ENCODE measurements at regions of chr15 and their contacts with region 1.

Region 1: GRCh38 chr15:31435261-31435911 is 108.8 kb downstream of the KLF13 start:
- DNase-seq: peak; percentile 84
- H3K4me3 ChIP-seq: no peak overlapping the region
- H3K27ac ChIP-seq: peak overlapping the region; percentile 28 to 79 (median 64)
- H3K4me1 ChIP-seq: peaks cover 9 to 26% of the 10 kb centered on the region in 2 donors
- H3K27me3 ChIP-seq: no peaks in the 10 kb centered on the region
- CTCF ChIP-seq: peak in 5 of 6 experiments; percentile 25 to 89 (median 80)
- POLR2A ChIP-seq: no peak

Region 2: GRCh38 chr15:31200735-31201151 is 234.6 kb before region 1 on chr15:
- intact Hi-C with region 1: loop called (anchors 5 kb)
- DNase-seq: peak; percentile 90 to 91
- H3K4me3 ChIP-seq: no peak overlapping the region
- H3K27ac ChIP-seq: no peak overlapping the region
- H3K4me1 ChIP-seq: peaks cover 0 to 4% of the 10 kb centered on the region in 2 donors
- H3K27me3 ChIP-seq: no peaks in the 10 kb centered on the region
- CTCF ChIP-seq: peak; percentile 22 to 89 (median 68)
- POLR2A ChIP-seq: no peak

Region 3: DNA sequence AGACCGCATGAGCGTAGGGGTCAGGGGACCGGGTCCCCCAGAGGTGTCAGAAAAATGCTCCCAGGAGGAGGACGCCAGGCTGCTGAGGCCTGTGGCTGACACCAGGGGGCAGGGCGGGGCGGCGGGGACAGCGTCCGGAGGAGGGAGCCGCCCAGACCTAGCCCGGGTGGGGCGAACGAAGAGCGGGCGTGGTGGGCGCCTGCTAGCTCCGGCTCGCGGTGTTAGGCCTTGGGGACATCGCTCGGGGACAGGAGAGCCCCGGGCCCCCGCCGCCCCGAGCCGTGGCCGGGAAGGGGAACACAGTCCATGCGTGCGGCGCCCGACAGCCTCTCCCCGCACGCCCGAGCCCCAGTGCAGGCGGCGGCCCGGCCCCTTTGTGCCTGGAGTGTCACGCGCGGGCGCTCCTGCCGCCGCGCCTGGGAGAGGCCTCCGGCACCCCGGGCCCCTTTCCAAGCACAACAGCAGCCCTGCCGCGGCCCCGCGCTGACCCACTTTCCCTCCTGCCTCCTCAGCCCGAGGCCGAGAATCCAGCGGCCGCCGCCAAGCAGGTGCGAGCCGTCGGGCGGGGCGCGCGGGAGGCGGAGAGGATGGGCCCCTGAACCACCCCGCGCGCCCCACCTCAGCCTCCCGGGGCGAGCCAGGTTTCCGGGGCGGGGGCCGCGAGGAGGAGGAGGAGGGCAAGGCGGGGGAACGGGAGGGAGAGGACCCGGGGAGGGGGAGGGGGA is 219.7 kb before region 1 on chr15:
- intact Hi-C with region 1: loop called (anchors 5 kb)
- DNase-seq: peak; percentile 95 to 96
- H3K4me3 ChIP-seq: peak overlapping the region in 1 of 3 donors; percentile 41
- H3K27ac ChIP-seq: peak overlapping the region; percentile 93 to 95 (median 95)
- H3K4me1 ChIP-seq: peaks cover 20 to 22% of the 10 kb centered on the region in 2 donors
- H3K27me3 ChIP-seq: no peaks in the 10 kb centered on the region
- CTCF ChIP-seq: peak; percentile 69 to 87 (median 80)
- POLR2A ChIP-seq: peak in 1 of 2 donors; percentile 73

Region 4: GRCh38 chr15:31326156-31326732 is 109.1 kb before region 1 on chr15:
- intact Hi-C with region 1: loop called (anchors 5 kb)
- DNase-seq: peak; percentile 98 to 99
- H3K4me3 ChIP-seq: peak overlapping the region; percentile 79 to 84 (median 80)
- H3K27ac ChIP-seq: peak overlapping the region; percentile 99 to 100 (median 99)
- H3K4me1 ChIP-seq: peaks cover 30 to 31% of the 10 kb centered on the region in 2 donors
- H3K27me3 ChIP-seq: no peaks in the 10 kb centered on the region
- CTCF ChIP-seq: peak in 1 of 6 experiments; percentile 15
- POLR2A ChIP-seq: peak; percentile 85 to 87

Region 5: GRCh38 chr15:31381801-31382712 is 53.3 kb before region 1 on chr15:
- intact Hi-C with region 1: loop called (anchors 5 kb)
- DNase-seq: no peak
- H3K4me3 ChIP-seq: no peak overlapping the region
- H3K27ac ChIP-seq: no peak overlapping the region
- H3K4me1 ChIP-seq: peaks cover 9 to 29% of the 10 kb centered on the region in 2 donors
- H3K27me3 ChIP-seq: no peaks in the 10 kb centered on the region
- CTCF ChIP-seq: no peak
- POLR2A ChIP-seq: no peak

Region 6: DNA sequence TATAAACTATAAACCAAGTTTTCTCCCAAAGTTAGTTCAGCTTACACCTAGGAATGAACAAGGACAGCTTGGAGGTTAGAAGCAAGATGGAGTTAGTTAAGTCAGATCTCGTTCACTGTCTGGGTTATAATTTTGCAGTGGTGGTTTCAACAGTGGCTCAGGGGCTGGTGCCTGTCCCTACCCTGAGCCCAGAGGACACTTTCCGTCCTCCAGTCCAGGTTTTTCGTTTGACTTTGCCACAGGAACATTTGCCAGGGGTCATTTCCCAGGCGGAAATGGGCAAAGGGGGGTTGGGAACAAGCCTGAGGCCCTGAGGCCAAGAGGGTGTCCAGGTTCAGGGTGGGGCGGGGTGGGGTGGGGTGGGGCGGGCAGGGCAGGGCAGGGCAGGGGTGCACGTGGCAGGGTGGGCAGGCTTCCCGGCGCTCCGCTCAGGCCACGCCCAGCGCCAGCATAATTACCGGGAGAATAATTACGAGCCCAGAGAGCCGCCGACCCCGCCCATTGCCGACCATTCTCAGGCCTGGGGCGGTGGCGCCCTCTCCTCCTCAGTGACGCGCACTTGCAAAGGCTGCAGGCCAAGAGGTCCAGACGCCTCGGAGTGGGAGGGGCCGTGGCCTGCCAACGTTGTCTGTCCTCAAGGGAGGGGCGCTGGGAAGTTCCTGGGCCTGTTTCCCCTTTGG is 38.4 kb before region 1 on chr15:
- intact Hi-C with region 1: loop called (anchors 5 kb)
- DNase-seq: peak; percentile 90 to 95
- H3K4me3 ChIP-seq: no peak overlapping the region
- H3K27ac ChIP-seq: peak overlapping the region; percentile 68 to 84 (median 83)
- H3K4me1 ChIP-seq: peaks cover 18 to 45% of the 10 kb centered on the region in 2 donors
- H3K27me3 ChIP-seq: no peaks in the 10 kb centered on the region
- CTCF ChIP-seq: peak in 2 of 6 experiments; percentile 13 to 18
- POLR2A ChIP-seq: no peak

Region 7: DNA sequence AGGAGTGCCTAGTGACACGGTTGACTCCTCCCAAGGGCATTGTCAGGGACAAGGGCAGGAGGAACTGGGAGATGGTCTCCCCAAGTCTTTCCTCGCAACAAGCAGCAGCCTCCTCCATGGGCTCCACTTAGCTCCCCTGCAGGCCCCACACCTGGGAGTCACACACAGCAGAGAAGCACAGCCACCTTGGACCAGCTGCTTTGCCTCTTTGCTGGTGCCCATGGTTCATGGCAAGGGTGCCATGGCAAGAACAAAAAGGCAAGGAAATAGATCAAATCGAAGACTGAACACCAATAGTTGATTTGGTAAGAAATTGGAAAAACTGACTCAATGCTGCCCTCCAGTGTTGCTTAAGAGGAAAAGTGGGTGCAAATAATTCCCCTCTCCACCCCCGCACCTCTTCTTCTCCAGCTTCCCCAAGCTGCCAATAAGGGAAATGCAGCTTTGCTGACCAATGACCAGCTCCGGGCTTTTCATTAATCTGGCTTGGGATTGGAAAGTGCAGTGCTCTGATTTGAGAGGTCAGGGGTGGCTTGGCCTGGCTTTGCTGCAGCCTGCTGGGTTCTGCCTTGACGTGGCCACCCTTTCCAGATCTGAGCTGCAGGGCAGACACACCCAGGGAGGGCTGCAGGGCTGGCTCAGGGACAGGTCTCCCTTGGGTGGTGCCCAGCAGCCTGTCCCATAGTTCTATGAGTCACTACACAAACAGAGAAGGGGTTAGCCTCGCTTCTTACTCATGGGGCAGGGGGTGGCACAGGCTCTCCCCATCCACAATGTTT is 53.2 kb after region 1 on chr15:
- intact Hi-C with region 1: loop called (anchors 5 kb)
- DNase-seq: peak; percentile 59
- H3K4me3 ChIP-seq: no peak overlapping the region
- H3K27ac ChIP-seq: peak overlapping the region in 2 of 3 donors; percentile 27 to 34
- H3K4me1 ChIP-seq: peaks cover 5 to 22% of the 10 kb centered on the region in 2 donors
- H3K27me3 ChIP-seq: no peaks in the 10 kb centered on the region
- CTCF ChIP-seq: peak; percentile 84 to 99 (median 94)
- POLR2A ChIP-seq: no peak

Measured in thyroid gland (tissue), 4 donors.